Naive thymus-derived CD4-positive, alpha-beta T cell (primary cell): ENCODE measurements at regions of chr7 and their contacts with region 1.

Region 1: DNA sequence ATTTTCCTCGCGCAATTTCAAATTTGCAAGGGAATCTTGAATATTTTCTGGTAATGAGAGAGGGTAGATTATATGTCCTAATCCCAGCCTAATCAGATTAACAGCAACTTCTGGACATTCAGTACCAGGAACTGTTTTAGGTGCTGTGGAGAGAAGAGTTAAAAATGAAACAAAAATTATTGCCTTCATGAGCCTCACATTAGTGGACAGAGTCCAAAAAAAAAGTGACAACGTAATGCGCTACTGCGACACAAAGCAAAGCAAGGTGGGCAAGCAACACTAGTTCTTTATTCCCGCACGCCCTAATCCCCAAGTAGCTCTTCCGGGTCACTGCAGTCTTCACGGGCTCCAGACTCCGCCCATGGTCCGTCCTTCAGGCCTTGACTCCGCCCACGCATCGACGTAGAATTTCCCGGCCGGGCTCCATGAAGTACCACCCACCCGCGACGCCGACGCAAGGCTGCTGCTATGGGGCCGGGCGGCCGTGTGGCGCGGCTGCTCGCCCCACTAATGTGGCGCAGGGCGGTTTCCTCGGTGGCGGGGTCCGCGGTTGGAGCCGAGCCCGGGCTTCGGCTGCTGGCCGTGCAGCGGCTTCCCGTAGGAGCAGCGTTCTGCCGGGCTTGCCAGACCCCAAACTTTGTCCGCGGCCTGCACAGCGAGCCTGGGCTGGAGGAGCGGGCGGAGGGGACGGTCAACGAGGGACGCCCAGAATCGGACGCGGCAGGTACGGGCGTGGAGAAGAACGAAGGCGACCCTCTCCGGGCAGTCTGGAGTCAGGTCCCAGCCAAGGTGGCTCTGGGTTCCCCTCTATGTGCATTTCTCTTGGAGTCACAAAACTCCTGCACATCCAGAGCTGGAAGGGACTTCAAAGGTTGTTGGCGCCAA is at the start of gene MALSU1:
- DNase-seq: peak; percentile 90 to 96 (median 94)
- ATAC-seq: peak; percentile 100
- H3K4me3 ChIP-seq: peak within 1 kb of the TSS; percentile 96
- H3K4me3 Mint-ChIP-seq: peak within 1 kb of the TSS; percentile 90 to 97 (median 94)
- H3K27ac ChIP-seq: peak within 1 kb of the TSS; percentile 92
- H3K27ac Mint-ChIP-seq: peak within 1 kb of the TSS; percentile 96 to 100 (median 98)
- H3K4me1 ChIP-seq: peaks cover 14 to 23% of the 10 kb centered on the region in 2 donors
- H3K4me1 Mint-ChIP-seq: peaks cover 34 to 55% (median 48%) of the 10 kb centered on the region in 7 donors
- H3K27me3 ChIP-seq: no peaks in the 10 kb centered on the region
- H3K27me3 Mint-ChIP-seq: peaks cover 0 to 10% (median 0%) of the 10 kb centered on the region in 5 donors
- total RNA-seq, gene MALSU1: 32.7 to 48.3 (median 44.8) TPM

Region 2: DNA sequence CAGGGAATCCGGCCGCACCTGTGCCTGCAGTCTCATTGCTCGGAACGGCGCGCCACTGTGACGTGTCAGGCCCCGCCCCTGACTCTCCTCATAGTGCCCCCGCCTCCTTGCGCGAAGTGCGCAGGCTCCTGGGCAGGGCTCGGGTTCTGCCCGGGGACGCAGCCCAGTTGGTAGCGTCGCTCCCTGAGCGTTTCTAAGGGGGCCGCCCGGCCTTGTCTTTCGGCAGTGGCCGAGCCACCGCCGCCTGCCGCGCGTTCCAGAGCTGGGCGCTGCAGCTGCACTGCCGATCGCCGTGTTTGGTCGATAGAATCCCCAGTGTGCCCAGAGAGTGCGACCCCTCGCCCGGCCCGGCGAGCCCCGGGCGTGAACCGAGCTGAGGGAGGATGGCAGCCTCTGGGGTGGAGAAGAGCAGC is 193.5 kb before region 1 on chr7 and contains the start of gene KLHL7:
- CTCF ChIA-PET with region 1: no interaction called
- POLR2A ChIA-PET with region 1: interaction called, 7 read pairs
- intact Hi-C with region 1: loop called (anchors 1 kb)
- DNase-seq: peak; percentile 90 to 95 (median 93)
- ATAC-seq: peak; percentile 99
- H3K4me3 ChIP-seq: peak within 1 kb of the TSS; percentile 93
- H3K4me3 Mint-ChIP-seq: peak within 1 kb of the TSS; percentile 90 to 99 (median 96)
- H3K27ac ChIP-seq: peak within 1 kb of the TSS; percentile 90
- H3K27ac Mint-ChIP-seq: peak within 1 kb of the TSS; percentile 91 to 97 (median 96)
- H3K4me1 ChIP-seq: peaks cover 4 to 18% of the 10 kb centered on the region in 2 donors
- H3K4me1 Mint-ChIP-seq: peaks cover 33 to 51% (median 47%) of the 10 kb centered on the region in 7 donors
- H3K27me3 ChIP-seq: no peaks in the 10 kb centered on the region
- H3K27me3 Mint-ChIP-seq: no peaks in the 10 kb centered on the region
- total RNA-seq, gene KLHL7: 16.9 to 22.9 (median 22.7) TPM

Region 3: DNA sequence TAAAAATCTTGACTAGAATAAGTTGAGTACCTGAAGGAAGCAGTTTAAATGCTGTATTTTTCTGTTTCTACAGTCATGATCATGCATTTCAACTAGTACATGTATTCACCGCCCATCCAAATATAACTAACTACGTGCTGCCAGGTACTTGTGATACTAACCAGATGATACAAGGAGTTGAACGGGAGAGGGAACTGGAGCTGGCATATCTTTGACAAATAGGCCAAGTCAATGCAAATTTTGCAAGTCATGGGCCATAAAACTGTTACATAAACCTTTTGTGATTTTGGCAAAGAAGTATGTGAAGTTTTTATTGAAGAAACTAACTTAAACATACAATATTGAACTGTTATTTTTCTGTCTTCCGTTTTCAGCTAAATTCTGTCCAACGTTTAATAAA is 102.8 kb before region 1 on chr7:
- CTCF ChIA-PET with region 1: no interaction called
- POLR2A ChIA-PET with region 1: no interaction called
- intact Hi-C with region 1: no loop called
- DNase-seq: no peak
- ATAC-seq: no peak
- H3K4me3 ChIP-seq: no peak overlapping the region
- H3K4me3 Mint-ChIP-seq: no peak overlapping the region
- H3K27ac ChIP-seq: no peak overlapping the region
- H3K27ac Mint-ChIP-seq: no peak overlapping the region
- H3K4me1 ChIP-seq: no peaks in the 10 kb centered on the region
- H3K4me1 Mint-ChIP-seq: no peaks in the 10 kb centered on the region
- H3K27me3 ChIP-seq: no peaks in the 10 kb centered on the region
- H3K27me3 Mint-ChIP-seq: no peaks in the 10 kb centered on the region

Region 4: DNA sequence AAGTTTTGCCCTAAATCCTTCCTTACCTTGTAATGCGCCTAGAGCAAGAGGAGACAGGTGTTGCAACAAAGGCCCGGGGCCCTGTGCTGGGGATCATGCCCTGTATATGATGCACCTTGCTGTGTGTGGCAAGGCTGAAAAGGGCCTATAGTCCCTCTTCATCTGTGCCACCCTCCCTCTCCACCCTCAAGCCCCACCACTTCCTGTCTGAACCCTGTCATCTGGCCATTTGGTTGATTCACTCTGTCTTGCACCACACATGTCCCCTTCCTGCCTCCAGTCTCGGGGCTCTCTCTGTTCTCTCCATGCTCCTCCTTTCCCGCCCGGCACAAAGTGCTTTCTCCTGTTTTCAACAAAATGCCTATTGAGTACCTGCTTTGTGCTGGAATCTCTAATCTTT is 11.5 kb before region 1 on chr7:
- CTCF ChIA-PET with region 1: interaction called, 7 read pairs
- POLR2A ChIA-PET with region 1: interaction called, 11 read pairs
- intact Hi-C with region 1: loop called (anchors 1 kb)
- DNase-seq: no peak
- ATAC-seq: peak; percentile 18
- H3K4me3 ChIP-seq: no peak overlapping the region
- H3K4me3 Mint-ChIP-seq: no peak overlapping the region
- H3K27ac ChIP-seq: no peak overlapping the region
- H3K27ac Mint-ChIP-seq: peak overlapping the region in 4 of 9 donors; percentile 18 to 81 (median 42)
- H3K4me1 ChIP-seq: peaks cover 0 to 13% of the 10 kb centered on the region in 2 donors
- H3K4me1 Mint-ChIP-seq: peaks cover 0 to 25% (median 16%) of the 10 kb centered on the region in 7 donors
- H3K27me3 ChIP-seq: no peaks in the 10 kb centered on the region
- H3K27me3 Mint-ChIP-seq: no peaks in the 10 kb centered on the region

Region 5: GRCh38 chr7:23474094-23474828 is 175.1 kb after region 1 on chr7:
- CTCF ChIA-PET with region 1: no interaction called
- POLR2A ChIA-PET with region 1: interaction called, 3 read pairs
- intact Hi-C with region 1: loop called in 1 of 2 experiments (anchors 1 kb)
- DNase-seq: peak in 6 of 9 donors; percentile 13 to 90 (median 26)
- ATAC-seq: peak; percentile 80
- H3K4me3 ChIP-seq: no peak overlapping the region
- H3K4me3 Mint-ChIP-seq: peak overlapping the region; percentile 13 to 85 (median 54)
- H3K27ac ChIP-seq: no peak overlapping the region
- H3K27ac Mint-ChIP-seq: peak overlapping the region in 5 of 9 donors; percentile 21 to 70 (median 69)
- H3K4me1 ChIP-seq: peaks cover 12 to 22% of the 10 kb centered on the region in 2 donors
- H3K4me1 Mint-ChIP-seq: peaks cover 17 to 35% (median 29%) of the 10 kb centered on the region in 7 donors
- H3K27me3 ChIP-seq: peaks cover 78 to 85% of the 10 kb centered on the region in 2 donors
- H3K27me3 Mint-ChIP-seq: peaks cover 67 to 75% (median 70%) of the 10 kb centered on the region in 5 donors

Region 6: GRCh38 chr7:23531794-23532489 is 232.8 kb after region 1 on chr7 and contains the start of gene TRA2A:
- CTCF ChIA-PET with region 1: interaction called, 3 read pairs
- POLR2A ChIA-PET with region 1: interaction called, 10 read pairs
- intact Hi-C with region 1: loop called (anchors 1 to 2 kb)
- DNase-seq: peak; percentile 93 to 97 (median 95)
- ATAC-seq: peak; percentile 96
- H3K4me3 ChIP-seq: peak within 1 kb of the TSS; percentile 80
- H3K4me3 Mint-ChIP-seq: peak within 1 kb of the TSS; percentile 89 to 100 (median 99)
- H3K27ac ChIP-seq: peak within 1 kb of the TSS; percentile 93
- H3K27ac Mint-ChIP-seq: peak within 1 kb of the TSS; percentile 98 to 100 (median 100)
- H3K4me1 ChIP-seq: peaks cover 30 to 31% of the 10 kb centered on the region in 2 donors
- H3K4me1 Mint-ChIP-seq: peaks cover 28 to 51% (median 46%) of the 10 kb centered on the region in 7 donors
- H3K27me3 ChIP-seq: no peaks in the 10 kb centered on the region
- H3K27me3 Mint-ChIP-seq: no peaks in the 10 kb centered on the region
- total RNA-seq, gene TRA2A: 131 to 263 (median 163) TPM

Region 7: DNA sequence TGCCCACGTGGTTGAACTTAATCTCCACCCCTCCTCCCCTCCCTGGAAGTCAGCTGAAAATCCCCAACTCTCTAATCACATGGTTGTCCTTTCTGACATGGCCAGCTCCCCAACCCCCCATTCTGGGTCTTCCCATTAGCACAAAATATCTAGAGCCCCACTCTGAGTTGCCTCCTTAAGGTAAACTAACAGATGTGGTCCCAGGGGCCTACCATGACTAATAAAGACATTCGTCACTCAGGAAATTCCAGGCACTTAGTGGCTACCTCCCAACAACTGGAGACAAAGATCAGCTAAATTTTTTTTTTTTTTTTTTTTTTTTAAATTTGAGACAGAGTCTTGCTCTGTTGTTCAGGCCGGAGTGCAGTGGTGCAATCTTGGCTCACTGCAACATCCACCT is 319.1 kb after region 1 on chr7:
- CTCF ChIA-PET with region 1: no interaction called
- POLR2A ChIA-PET with region 1: interaction called, 13 read pairs
- intact Hi-C with region 1: no loop called
- DNase-seq: no peak
- ATAC-seq: no peak
- H3K4me3 ChIP-seq: no peak overlapping the region
- H3K4me3 Mint-ChIP-seq: no peak overlapping the region
- H3K27ac ChIP-seq: no peak overlapping the region
- H3K27ac Mint-ChIP-seq: no peak overlapping the region
- H3K4me1 ChIP-seq: no peaks in the 10 kb centered on the region
- H3K4me1 Mint-ChIP-seq: peaks cover 0 to 11% (median 5%) of the 10 kb centered on the region in 7 donors
- H3K27me3 ChIP-seq: no peaks in the 10 kb centered on the region
- H3K27me3 Mint-ChIP-seq: no peaks in the 10 kb centered on the region

Region 8: GRCh38 chr7:25179771-25180591 is 1880.9 kb after region 1 on chr7:
- CTCF ChIA-PET with region 1: no interaction called
- POLR2A ChIA-PET with region 1: no interaction called
- intact Hi-C with region 1: loop called in 1 of 2 experiments (anchors 5 kb)
- DNase-seq: peak; percentile 88 to 99 (median 94)
- ATAC-seq: peak; percentile 99
- H3K4me3 ChIP-seq: peak overlapping the region; percentile 75
- H3K4me3 Mint-ChIP-seq: peak overlapping the region; percentile 82 to 93 (median 88)
- H3K27ac ChIP-seq: peak overlapping the region; percentile 86
- H3K27ac Mint-ChIP-seq: peak overlapping the region; percentile 83 to 96 (median 92)
- H3K4me1 ChIP-seq: peaks cover 6 to 7% of the 10 kb centered on the region in 2 donors
- H3K4me1 Mint-ChIP-seq: peaks cover 13 to 31% (median 22%) of the 10 kb centered on the region in 7 donors
- H3K27me3 ChIP-seq: no peaks in the 10 kb centered on the region
- H3K27me3 Mint-ChIP-seq: peaks cover 0 to 12% (median 0%) of the 10 kb centered on the region in 5 donors